Common myeloid progenitor, CD34-positive (primary cell): ENCODE measurements at regions of chr19 and their contacts with region 1.

Region 1: GRCh38 chr19:35135389-35135909 is 590 bp upstream of the LGI4 start:
- DNase-seq: peak; percentile 75 to 87 (median 85)
- H3K4me3 ChIP-seq: no peak overlapping the region
- H3K27ac ChIP-seq: no peak overlapping the region
- H3K4me1 ChIP-seq: peaks cover 0 to 8% (median 1%) of the 10 kb centered on the region in 4 experiments
- H3K27me3 ChIP-seq: peaks cover 0 to under 1% (median 0%) of the 10 kb centered on the region in 5 experiments

Region 2: DNA sequence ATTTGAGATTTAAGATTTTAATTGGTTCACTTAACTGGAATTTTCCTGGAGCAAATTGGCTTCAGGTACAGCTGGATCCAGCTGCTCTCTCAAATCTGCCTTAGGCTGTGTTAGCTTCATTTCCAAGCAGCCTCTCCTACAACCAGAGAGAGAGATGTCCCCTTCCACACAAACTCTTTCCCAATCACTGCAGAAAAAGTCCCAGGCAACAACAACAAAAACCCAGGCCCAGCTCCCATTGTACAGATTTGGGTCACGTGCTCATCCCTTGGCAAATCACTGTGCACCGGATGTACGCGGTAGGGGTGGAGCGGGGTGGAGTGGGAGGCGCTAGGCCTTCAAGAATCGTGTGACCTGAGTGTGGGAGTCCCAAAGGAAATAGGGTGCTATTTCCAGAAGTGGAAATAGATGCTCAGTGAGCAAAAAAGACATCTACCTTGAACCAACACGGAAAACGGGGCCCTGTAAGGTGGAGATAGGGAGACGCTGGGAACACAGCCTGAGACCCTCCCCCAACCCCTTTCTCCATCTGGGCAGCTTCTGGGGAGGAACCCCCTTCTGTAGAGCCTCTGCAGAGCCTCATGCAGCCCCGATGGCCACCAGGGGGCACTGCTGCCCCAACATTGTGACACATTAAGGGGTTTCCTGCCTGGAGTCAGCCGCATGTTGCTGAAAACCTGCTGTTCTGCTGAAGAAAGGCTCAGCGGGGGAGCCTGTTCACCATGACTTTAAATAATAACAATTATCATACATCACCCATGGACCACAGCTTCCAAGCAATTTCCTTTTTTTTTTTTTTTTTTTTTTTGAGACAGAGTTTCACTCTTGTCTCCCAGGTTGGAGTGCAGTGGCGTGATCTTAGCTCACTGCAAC is 68.5 kb before region 1 on chr19:
- CTCF ChIA-PET with region 1: interaction called, 50 read pairs
- POLR2A ChIA-PET with region 1: no interaction called
- DNase-seq: peak; percentile 89 to 94 (median 92)
- H3K4me3 ChIP-seq: no peak overlapping the region
- H3K27ac ChIP-seq: no peak overlapping the region
- H3K4me1 ChIP-seq: no peaks in the 10 kb centered on the region
- H3K27me3 ChIP-seq: peaks cover 0 to 4% (median 0%) of the 10 kb centered on the region in 5 experiments

Region 3: DNA sequence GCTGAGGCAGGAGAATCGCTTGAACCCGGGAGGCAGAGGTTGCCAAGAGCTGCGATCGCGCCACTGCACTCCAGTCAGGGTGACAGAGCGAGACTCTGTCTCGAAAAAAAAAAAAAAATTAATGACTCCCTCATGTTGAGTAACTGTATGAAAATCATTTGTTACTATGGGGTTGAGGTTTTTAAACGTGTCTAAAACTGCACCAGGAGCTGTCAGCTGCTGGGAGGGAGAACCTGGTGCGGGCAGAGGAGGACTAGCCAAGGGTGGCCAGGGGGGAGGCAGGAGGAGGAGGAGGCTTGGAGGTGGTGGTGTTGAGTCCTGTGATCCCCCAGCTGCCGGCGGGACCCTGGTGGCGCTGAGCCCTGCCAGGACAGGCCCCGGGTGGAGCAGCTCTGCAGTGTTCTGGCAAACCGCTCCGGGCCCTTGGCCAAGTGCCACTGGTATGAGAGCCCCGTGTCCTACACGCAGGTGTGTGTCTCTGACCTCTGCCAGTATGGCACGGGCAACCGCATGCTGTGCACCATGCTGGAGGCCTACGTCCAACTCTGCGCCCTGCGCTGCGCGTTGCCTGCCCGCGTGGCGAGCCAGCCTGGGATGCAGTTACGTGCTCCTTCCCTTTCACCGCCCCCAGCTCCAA is 36.9 kb before region 1 on chr19:
- CTCF ChIA-PET with region 1: interaction called, 12 read pairs
- POLR2A ChIA-PET with region 1: no interaction called
- DNase-seq: no peak
- H3K4me3 ChIP-seq: no peak overlapping the region
- H3K27ac ChIP-seq: no peak overlapping the region
- H3K4me1 ChIP-seq: no peaks in the 10 kb centered on the region
- H3K27me3 ChIP-seq: no peaks in the 10 kb centered on the region

Region 4: DNA sequence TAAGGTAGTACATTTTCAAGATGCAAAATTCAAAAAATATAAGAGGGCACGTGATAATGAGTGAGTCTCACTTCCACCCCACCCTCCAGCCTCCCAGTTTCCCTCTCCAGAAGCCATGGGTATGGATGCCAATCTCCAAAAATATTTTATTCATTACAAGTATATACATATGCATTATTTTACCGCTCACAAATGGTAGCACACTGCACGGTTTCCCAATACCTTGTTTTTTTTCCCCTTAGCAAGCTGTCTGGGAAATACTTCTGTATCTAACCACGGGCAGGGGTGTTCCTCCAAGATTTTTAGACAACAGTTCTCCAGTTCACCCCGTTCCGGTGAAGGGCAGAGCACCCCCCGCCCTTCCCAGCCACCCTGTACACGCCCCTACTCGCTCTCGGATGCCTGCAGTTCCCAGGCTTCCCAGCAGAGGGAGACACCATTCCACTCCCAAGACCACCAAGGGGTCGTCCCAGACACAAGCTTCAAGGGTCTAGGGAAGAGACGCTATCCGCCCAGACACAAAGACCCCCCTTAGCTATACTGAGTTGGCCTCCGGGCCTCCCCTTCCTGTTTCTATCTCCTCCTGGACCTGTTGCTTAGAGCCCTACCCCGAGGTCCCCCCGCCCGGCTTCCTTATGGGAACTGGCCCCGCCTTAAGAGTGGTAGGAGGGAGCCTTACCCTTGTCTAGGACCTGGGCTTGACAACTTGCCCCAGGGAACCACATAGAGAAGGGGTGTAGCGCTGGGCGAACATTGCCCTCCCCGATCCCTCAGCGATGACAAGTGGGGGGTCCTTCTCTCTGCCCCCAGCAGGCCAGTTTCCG is 20.9 kb before region 1 on chr19:
- CTCF ChIA-PET with region 1: interaction called, 54 read pairs
- POLR2A ChIA-PET with region 1: no interaction called
- DNase-seq: peak; percentile 82 to 88 (median 83)
- H3K4me3 ChIP-seq: peak overlapping the region in 6 of 7 experiments; percentile 36 to 73 (median 54)
- H3K27ac ChIP-seq: no peak overlapping the region
- H3K4me1 ChIP-seq: peaks cover 1 to 59% (median 32%) of the 10 kb centered on the region in 4 experiments
- H3K27me3 ChIP-seq: no peaks in the 10 kb centered on the region

Region 5: GRCh38 chr19:35168207-35168606 is 32.8 kb after region 1 on chr19:
- CTCF ChIA-PET with region 1: no interaction called
- POLR2A ChIA-PET with region 1: no interaction called
- DNase-seq: peak in 1 of 3 donors; percentile 52
- H3K4me3 ChIP-seq: peak overlapping the region in 1 of 7 experiments; percentile 11
- H3K27ac ChIP-seq: peak overlapping the region in 1 of 2 experiments; percentile 69
- H3K4me1 ChIP-seq: peaks cover 14 to 54% (median 39%) of the 10 kb centered on the region in 4 experiments
- H3K27me3 ChIP-seq: no peaks in the 10 kb centered on the region